Heart right ventricle (tissue), 16 donors: ENCODE measurements at regions of chr16 and their contacts with region 1.

Region 1: DNA sequence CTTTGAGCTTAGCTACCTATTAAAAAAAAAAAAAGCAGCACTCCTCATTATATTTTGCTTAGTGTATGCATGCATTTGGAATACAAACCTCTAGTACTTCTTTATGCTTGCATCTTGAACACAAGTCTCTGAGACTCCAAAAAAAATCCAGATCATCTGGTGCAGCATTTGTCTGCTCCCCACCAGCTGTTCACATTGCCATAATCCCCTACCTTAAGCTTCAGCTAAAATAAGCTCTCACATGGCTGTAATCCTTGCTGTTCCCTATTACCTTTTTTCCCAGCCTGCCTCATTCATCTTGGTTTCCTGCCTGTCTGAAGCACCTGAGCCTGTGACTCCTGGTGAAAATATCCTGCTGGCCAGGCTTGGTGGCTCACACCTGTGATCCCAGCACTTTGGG is 7.5 kb upstream of the NFATC2IP start:
- DNase-seq: no peak
- ATAC-seq: no peak
- H3K4me3 ChIP-seq: no peak overlapping the region
- H3K27ac ChIP-seq: no peak overlapping the region
- H3K4me1 ChIP-seq: peaks cover 2 to 12% (median 10%) of the 10 kb centered on the region in 9 donors
- H3K27me3 ChIP-seq: no peaks in the 10 kb centered on the region
- CTCF ChIP-seq: no peak

Region 2: DNA sequence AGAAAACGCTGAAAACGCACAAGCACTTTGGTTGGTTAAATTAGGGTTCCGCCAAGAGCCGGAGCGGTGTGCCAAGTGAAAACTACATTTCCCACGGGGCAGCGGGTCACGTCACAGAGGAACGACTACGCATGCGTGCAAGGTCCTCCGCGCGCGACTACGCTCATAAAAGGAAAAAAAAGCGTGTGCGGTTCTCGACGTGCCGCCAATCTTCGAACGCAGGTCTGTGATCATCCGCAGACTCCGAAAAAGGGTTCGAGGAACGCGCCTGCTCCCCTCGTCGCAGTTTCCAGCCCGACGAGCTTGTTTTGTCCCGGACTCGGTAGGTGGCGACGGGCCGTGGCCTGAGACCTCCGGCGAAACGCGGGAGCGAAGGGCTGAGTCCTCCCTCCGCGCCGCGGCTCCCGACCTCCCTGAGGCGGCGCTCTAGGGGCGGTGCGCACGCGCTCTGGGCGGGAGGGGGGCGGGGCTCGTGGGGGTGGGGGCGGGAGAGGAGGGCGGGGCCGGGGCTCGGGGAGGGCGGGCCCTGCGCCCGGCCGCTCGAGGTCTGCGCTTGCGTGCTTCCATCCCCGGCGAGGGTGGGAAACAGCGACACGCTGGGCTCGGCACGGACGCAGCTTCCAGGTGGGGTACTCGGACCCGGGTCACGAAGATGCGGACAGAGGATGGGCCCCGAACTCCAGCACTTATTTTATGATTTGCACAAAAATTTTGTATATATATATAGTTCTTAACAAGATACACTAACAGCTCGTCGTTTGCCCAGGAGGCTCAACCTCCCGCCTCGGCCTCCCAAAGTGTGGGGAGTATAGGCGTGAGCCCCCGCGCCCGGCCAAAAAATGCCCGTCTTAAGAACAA is 389.3 kb before region 1 on chr16 and contains the start of gene SGF29:
- intact Hi-C with region 1: loop called in 2 of 10 experiments (anchors 5 to 10 kb)
- DNase-seq: peak; percentile 92 to 95
- ATAC-seq: peak; percentile 96 to 98 (median 96)
- H3K4me3 ChIP-seq: peak within 1 kb of the TSS; percentile 14 to 86 (median 67)
- H3K27ac ChIP-seq: peak within 1 kb of the TSS; percentile 93 to 98 (median 98)
- H3K4me1 ChIP-seq: peaks cover 4 to 32% (median 11%) of the 10 kb centered on the region in 9 donors
- H3K27me3 ChIP-seq: no peaks in the 10 kb centered on the region
- CTCF ChIP-seq: peak in 8 of 9 donors; percentile 21 to 70 (median 38)
- total RNA-seq, gene SGF29: 11.1 to 20.9 (median 13.6) TPM

Region 3: GRCh38 chr16:28823872-28824716 is 119.2 kb before region 1 on chr16:
- intact Hi-C with region 1: loop called in 6 of 10 experiments (anchors 2 to 10 kb)
- DNase-seq: peak; percentile 97 to 99
- ATAC-seq: peak; percentile 92 to 97 (median 95)
- H3K4me3 ChIP-seq: peak overlapping the region; percentile 79 to 100 (median 100)
- H3K27ac ChIP-seq: peak overlapping the region; percentile 92 to 100 (median 100)
- H3K4me1 ChIP-seq: peaks cover 8 to 34% (median 23%) of the 10 kb centered on the region in 9 donors
- H3K27me3 ChIP-seq: no peaks in the 10 kb centered on the region
- CTCF ChIP-seq: peak in 7 of 9 donors; percentile 24 to 49 (median 39)

Region 4: GRCh38 chr16:28846080-28846932 is 97.0 kb before region 1 on chr16 and contains the start of gene TUFM:
- intact Hi-C with region 1: loop called in 1 of 10 experiments (anchors 5 kb)
- DNase-seq: peak; percentile 98 to 99
- ATAC-seq: peak; percentile 98 to 99 (median 99)
- H3K4me3 ChIP-seq: peak within 1 kb of the TSS; percentile 79 to 94 (median 86)
- H3K27ac ChIP-seq: peak within 1 kb of the TSS; percentile 48 to 90 (median 88)
- H3K4me1 ChIP-seq: peaks cover 5 to 27% (median 23%) of the 10 kb centered on the region in 9 donors
- H3K27me3 ChIP-seq: no peaks in the 10 kb centered on the region
- CTCF ChIP-seq: peak; percentile 34 to 86 (median 80)
- total RNA-seq, gene TUFM: 193 to 250 (median 236) TPM

Region 5: DNA sequence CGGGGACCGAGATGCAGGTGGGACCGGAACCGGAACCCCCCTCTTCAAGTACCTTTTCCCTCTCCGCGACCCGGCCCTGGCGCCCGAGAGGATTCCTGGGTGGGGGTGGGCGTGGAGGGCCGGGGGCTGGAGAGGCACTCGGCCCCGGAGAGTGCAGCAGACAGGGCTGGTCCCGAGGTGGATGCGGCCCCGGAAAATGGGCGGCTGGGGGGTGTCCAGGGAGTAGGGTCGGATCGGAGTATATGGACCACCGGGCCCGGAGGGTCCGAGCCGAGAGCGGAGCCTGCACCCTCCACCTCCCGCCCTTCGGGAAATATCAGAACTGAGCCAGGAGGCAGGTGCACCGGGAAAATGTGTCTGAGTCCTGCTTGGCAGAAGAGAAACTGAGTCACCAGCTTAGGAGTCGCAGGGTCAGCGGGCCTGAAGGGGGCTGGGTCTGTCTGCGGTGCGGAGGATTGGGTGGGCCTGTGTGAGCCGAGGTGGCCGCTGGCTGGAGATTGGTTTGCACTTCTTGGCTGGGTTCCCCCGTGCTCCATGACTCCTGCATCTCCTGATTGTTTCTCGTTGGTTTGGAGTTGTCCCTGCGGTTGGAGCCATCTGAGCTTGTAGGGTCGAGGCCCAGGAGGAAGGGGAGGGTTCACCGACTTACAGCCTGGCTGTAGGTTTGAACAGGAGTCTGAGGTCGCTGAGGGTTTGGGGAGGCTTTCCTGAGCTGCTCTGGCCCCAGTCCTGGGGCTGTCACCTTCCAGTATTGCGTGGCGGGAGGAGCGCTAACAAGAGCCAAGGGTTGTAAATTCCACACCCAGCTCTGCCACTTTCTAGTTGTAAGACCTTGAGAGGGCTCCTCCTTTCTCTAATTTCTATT is 79.1 kb before region 1 on chr16:
- intact Hi-C with region 1: loop called in 4 of 10 experiments (anchors 5 kb)
- DNase-seq: peak in 1 of 2 donors; percentile 27
- ATAC-seq: peak in 7 of 8 donors; percentile 1 to 14 (median 5)
- H3K4me3 ChIP-seq: peak overlapping the region; percentile 52 to 98 (median 96)
- H3K27ac ChIP-seq: peak overlapping the region; percentile 93 to 100 (median 98)
- H3K4me1 ChIP-seq: peaks cover 4 to 27% (median 19%) of the 10 kb centered on the region in 9 donors
- H3K27me3 ChIP-seq: no peaks in the 10 kb centered on the region
- CTCF ChIP-seq: no peak

Region 6: GRCh38 chr16:28879841-28880588 is 63.3 kb before region 1 on chr16:
- intact Hi-C with region 1: loop called in 4 of 10 experiments (anchors 5 to 10 kb)
- DNase-seq: peak; percentile 89
- ATAC-seq: peak; percentile 87 to 96 (median 95)
- H3K4me3 ChIP-seq: peak overlapping the region; percentile 48 to 99 (median 78)
- H3K27ac ChIP-seq: peak overlapping the region in 1 of 10 donors; percentile 65
- H3K4me1 ChIP-seq: peaks cover 0 to 16% (median 13%) of the 10 kb centered on the region in 9 donors
- H3K27me3 ChIP-seq: peaks cover 0 to 23% (median 5%) of the 10 kb centered on the region in 7 donors
- CTCF ChIP-seq: peak in 4 of 9 donors; percentile 15 to 39 (median 22)

Region 7: DNA sequence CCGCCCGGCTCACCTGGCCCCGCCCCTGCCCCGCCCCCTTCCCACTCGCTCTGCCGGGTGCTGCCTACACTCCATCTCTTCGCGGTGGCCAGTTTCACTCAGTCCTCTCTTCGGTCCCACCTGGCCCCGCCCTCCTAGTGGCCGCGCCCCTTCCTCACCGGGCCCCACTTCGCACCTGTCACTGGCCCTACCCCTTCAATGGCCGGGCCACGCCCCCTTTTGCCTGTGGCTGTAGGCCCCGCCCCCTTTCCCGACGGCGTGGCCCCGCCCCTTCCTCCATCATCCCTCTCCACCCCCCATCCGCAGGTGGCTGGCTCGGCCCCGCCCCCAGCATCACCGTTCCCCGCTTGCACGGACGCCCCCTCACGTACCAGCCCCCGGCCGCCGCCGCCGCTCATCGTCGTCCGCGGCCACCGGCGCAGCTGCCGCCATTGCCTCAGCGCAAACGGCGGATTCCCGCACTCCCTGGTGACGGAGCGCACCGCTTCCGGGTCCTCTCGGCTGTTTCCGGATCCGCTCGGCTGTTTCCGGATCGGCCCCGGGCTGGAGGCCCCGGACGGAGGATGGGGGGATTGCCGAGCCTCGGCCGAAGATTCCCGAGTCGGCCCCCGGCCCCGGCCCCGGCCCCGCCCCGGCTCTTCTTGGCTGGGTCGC is 18.4 kb before region 1 on chr16 and contains the start of gene RABEP2:
- intact Hi-C with region 1: loop called in 2 of 10 experiments (anchors 1 kb)
- DNase-seq: peak; percentile 93 to 97
- ATAC-seq: peak; percentile 93 to 96 (median 95)
- H3K4me3 ChIP-seq: peak within 1 kb of the TSS; percentile 42 to 92 (median 86)
- H3K27ac ChIP-seq: peak within 1 kb of the TSS; percentile 89 to 100 (median 99)
- H3K4me1 ChIP-seq: peaks cover 2 to 20% (median 11%) of the 10 kb centered on the region in 9 donors
- H3K27me3 ChIP-seq: no peaks in the 10 kb centered on the region
- CTCF ChIP-seq: no peak
- total RNA-seq, gene RABEP2: 11.8 to 20.0 (median 15.5) TPM

Region 8: DNA sequence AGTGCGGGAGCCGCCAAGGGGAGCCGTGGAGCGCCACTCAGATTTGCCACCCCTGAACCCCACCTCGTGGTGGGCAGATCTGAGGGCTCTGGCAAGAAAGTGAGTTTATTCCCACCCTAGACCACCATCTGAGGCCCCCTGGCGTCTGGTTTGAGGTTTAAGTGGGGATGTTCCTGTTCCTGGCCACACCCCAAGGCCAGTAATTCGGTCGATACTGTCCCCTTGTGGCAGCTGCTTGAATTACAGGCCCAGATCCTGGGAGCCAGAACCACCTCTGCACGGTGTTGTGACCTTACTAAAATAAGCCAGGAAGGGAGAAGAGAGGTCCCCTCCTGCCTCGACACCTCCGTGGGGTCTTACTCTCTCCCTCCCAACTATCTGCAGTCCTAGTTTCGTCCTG is 38.2 kb after region 1 on chr16:
- intact Hi-C with region 1: no loop called
- DNase-seq: no peak
- ATAC-seq: no peak
- H3K4me3 ChIP-seq: no peak overlapping the region
- H3K27ac ChIP-seq: no peak overlapping the region
- H3K4me1 ChIP-seq: peaks cover 0 to 13% (median 0%) of the 10 kb centered on the region in 9 donors
- H3K27me3 ChIP-seq: no peaks in the 10 kb centered on the region
- CTCF ChIP-seq: peak in 6 of 9 donors; percentile 16 to 41 (median 23)